ENCODE measurements at regions of chr3 and their contacts with region 1.

Region 1: DNA sequence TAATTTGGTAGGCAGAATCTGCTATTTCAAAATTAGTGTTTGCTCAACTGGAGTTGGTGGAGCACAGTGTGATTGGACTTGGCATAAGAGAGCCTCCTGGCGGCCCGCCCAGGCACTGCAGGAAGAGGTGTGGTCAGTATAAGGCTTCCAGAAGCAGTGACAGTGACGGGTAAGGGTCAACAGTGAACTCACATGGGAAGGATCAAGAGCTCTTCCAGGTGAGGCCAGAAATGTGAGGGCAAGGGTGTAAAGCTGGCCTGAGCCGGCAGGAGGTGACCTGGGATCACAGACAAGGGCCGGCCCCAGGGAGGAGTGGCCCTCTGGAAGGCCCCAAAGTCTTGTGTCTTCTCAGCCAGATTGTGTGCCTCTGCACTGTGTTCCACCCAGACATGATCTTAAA is 93.2 kb upstream of the RNF7 start:
- DNase-seq: no peak
- ATAC-seq: peak; percentile 99
- H3K4me3 ChIP-seq: no peak overlapping the region
- H3K27ac ChIP-seq: no peak overlapping the region
- H3K4me1 ChIP-seq: no peaks in the 10 kb centered on the region
- H3K27me3 ChIP-seq: no peaks in the 10 kb centered on the region
- CTCF ChIP-seq: peak; percentile 78 to 97 (median 96)
- EP300 ChIP-seq: no peak
- POLR2A ChIP-seq: no peak
- RAD21 ChIP-seq: peak; percentile 71

Region 2: DNA sequence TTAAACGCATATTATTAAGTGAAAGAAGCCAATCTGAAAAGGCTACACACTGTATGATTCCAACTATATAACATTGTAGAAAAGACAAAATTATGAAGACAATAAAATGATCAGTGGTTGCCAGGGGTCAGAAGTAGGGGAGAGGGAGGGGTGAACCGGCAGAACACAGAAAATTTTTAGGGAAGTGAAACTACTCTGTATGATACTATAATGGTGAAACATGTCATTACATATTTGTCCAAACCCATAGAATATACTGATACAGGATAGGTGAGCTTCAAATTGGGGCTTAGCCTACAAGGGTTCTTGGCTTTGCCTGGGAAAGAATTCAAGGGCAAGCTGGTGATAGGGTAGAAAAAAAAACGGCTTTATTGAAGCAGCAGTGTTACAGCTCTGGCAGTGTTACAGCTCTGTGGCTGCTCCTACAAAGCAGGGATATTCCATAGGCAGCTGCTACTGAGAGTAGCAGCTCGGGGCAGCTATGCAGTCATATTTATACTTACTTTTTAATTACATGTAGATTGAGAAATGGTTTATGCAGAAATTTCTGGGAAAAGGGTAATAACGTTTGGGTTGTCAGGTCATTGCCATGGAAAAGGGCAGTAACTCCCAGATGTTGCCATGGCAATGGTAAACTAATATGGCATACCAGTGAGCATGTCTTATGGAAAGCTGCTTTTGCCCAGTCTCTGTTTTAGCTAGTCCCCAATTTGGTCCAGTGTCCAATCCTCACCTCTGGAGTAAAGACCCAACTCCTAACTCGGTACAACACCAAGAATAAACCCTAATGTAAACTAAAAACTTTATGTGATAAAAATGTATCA is 828.3 kb before region 1 on chr3:
- CTCF ChIA-PET with region 1: no interaction called
- POLR2A ChIA-PET with region 1: no interaction called
- RAD21 ChIA-PET with region 1: no interaction called
- SMC1A ChIA-PET with region 1: no interaction called
- in situ Hi-C with region 1: no loop called
- intact Hi-C with region 1: no loop called
- DNase-seq: peak; percentile 32
- ATAC-seq: peak; percentile 100
- H3K4me3 ChIP-seq: no peak overlapping the region
- H3K27ac ChIP-seq: no peak overlapping the region
- H3K4me1 ChIP-seq: no peaks in the 10 kb centered on the region
- H3K27me3 ChIP-seq: no peaks in the 10 kb centered on the region
- CTCF ChIP-seq: no peak
- EP300 ChIP-seq: peak in 1 of 2 experiments; percentile 40; a peak in 1 of 4 replicates
- POLR2A ChIP-seq: no peak
- RAD21 ChIP-seq: no peak

Region 3: DNA sequence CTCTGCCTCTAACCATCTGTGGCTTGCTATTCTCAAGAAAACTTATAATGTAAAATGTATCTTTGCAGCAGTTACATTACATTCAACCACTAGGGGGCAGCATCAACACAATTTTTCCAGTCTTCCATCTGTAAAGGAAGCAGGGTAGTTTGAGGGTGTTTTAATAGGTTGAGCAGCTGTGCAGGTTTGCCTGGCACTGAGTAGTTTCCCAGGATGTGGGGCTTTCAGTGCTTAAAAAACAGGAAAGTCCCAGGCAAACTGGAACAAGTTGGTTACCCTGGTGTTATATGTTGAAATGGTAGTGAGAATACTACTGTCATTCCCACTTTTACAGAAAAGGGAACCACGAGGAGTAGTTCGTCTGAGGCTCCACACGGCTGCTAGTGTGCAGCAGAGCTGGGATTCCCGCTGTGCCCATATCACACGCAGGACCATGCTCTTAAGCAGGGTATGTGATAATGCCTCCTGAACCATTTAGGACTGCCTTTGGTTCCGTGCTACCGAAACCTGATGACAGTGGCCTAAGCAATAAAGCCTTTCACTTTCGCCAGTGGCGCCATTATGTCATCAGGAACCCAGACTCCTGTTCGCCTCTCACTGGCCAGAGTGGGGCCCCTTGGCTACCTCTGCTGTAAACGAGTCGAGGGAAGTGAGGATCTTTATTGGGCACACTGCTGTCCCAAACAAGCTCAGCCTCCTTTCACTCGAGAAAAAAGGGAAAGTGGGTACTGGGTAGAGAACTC is 341.3 kb before region 1 on chr3:
- CTCF ChIA-PET with region 1: interaction called, 6 read pairs
- POLR2A ChIA-PET with region 1: no interaction called
- RAD21 ChIA-PET with region 1: no interaction called
- SMC1A ChIA-PET with region 1: no interaction called
- in situ Hi-C with region 1: loop called (anchors 10 kb)
- intact Hi-C with region 1: no loop called
- DNase-seq: peak; percentile 64
- ATAC-seq: peak; percentile 93
- H3K4me3 ChIP-seq: no peak overlapping the region
- H3K27ac ChIP-seq: no peak overlapping the region
- H3K4me1 ChIP-seq: peaks cover 8% of the 10 kb centered on the region
- H3K27me3 ChIP-seq: no peaks in the 10 kb centered on the region
- CTCF ChIP-seq: peak; percentile 55 to 78 (median 70); a peak in 5 of 6 replicates
- EP300 ChIP-seq: no peak
- POLR2A ChIP-seq: no peak
- RAD21 ChIP-seq: peak; percentile 89

Region 4: GRCh38 chr3:141460097-141460704 is 184.7 kb before region 1 on chr3:
- CTCF ChIA-PET with region 1: interaction called, 18 read pairs
- POLR2A ChIA-PET with region 1: interaction called, 3 read pairs
- RAD21 ChIA-PET with region 1: interaction called, 7 read pairs
- SMC1A ChIA-PET with region 1: interaction called, 9 read pairs
- in situ Hi-C with region 1: loop called (anchors 5 kb)
- intact Hi-C with region 1: loop called (anchors 1 kb)
- DNase-seq: no peak
- ATAC-seq: peak; percentile 100
- H3K4me3 ChIP-seq: no peak overlapping the region
- H3K27ac ChIP-seq: no peak overlapping the region
- H3K4me1 ChIP-seq: peaks cover 3% of the 10 kb centered on the region; the same call in 1 of the 2 replicates
- H3K27me3 ChIP-seq: no peaks in the 10 kb centered on the region
- CTCF ChIP-seq: peak; percentile 79 to 96 (median 87)
- EP300 ChIP-seq: no peak
- POLR2A ChIP-seq: no peak
- RAD21 ChIP-seq: peak; percentile 89

Region 5: GRCh38 chr3:141575879-141576743 is 68.8 kb before region 1 on chr3:
- CTCF ChIA-PET with region 1: interaction called, 13 read pairs
- POLR2A ChIA-PET with region 1: no interaction called
- RAD21 ChIA-PET with region 1: no interaction called
- SMC1A ChIA-PET with region 1: no interaction called
- in situ Hi-C with region 1: no loop called
- intact Hi-C with region 1: loop called (anchors 5 kb)
- DNase-seq: no peak
- ATAC-seq: peak; percentile 93
- H3K4me3 ChIP-seq: no peak overlapping the region
- H3K27ac ChIP-seq: no peak overlapping the region
- H3K4me1 ChIP-seq: peaks cover 5% of the 10 kb centered on the region; the same call in 1 of the 2 replicates
- H3K27me3 ChIP-seq: no peaks in the 10 kb centered on the region
- CTCF ChIP-seq: peak; percentile 39 to 47 (median 42); a peak in 4 of 6 replicates
- EP300 ChIP-seq: no peak
- POLR2A ChIP-seq: no peak
- RAD21 ChIP-seq: peak; percentile 53

Region 6: DNA sequence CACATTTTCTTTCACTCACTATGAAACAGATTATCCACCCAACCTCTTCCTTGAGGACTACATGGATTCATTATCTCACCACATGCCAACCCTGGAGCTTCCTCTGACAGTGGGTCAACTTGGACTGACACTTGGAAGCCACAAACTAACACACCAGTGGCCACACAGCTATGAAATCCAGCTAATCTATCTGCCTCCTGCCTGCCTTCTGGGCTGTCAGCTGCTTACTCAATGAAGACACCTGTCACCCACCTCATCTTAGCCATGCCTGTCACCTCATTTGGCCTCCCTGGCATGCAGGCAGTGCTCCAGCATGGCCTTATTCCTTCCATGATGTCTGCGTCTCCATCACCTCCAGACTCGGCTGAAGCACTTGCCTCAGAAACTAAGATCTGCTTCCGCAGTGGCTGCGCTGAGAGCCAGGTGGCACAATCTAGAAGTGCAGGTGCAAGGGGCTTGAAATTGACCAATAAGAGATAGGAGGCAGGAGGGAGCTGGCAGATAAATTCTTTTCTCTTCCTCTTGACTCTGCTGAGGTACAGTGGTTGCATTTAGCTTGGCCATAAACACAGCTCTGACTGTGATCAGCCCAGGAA is 12.1 kb before region 1 on chr3:
- CTCF ChIA-PET with region 1: interaction called, 10 read pairs
- POLR2A ChIA-PET with region 1: no interaction called
- RAD21 ChIA-PET with region 1: no interaction called
- SMC1A ChIA-PET with region 1: interaction called, 3 read pairs
- in situ Hi-C with region 1: no loop called
- intact Hi-C with region 1: no loop called
- DNase-seq: no peak
- ATAC-seq: no peak
- H3K4me3 ChIP-seq: no peak overlapping the region
- H3K27ac ChIP-seq: no peak overlapping the region
- H3K4me1 ChIP-seq: no peaks in the 10 kb centered on the region
- H3K27me3 ChIP-seq: no peaks in the 10 kb centered on the region; a peak in 1 of 4 replicates
- CTCF ChIP-seq: no peak
- EP300 ChIP-seq: no peak
- POLR2A ChIP-seq: no peak
- RAD21 ChIP-seq: no peak

Measured in GM12878 (cell line).